Mammary epithelial cell (primary cell): ENCODE measurements at regions of chr1 and their contacts with region 1.

Region 1: DNA sequence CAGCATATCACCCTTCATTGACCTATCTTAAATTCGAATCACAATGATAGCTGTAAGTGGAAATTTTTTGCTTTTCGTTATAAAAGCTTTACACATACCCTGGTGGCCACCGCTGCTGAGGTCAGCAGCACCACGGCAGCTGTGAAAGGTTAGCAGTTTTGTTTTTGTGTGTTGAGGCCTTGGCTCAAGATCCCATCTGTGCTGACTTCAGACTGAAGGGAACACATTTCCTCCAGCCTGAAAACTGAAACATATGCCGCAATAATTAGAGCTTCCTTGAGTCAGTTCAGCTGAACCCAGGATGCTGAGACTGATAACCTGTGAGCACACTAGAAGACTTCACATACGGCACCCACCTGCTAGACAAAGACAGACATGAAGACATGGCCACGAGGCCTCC is 103.0 kb downstream of the SMYD3 start:
- DNase-seq: no peak
- H3K4me3 ChIP-seq: no peak overlapping the region
- H3K27ac ChIP-seq: no peak overlapping the region
- H3K4me1 ChIP-seq: no peaks in the 10 kb centered on the region
- H3K27me3 ChIP-seq: no peaks in the 10 kb centered on the region
- CTCF ChIP-seq: no peak

Region 2: GRCh38 chr1:246355411-246356230 is 48.5 kb before region 1 on chr1:
- CTCF ChIA-PET with region 1: no interaction called
- dilution Hi-C with region 1: no loop called
- in situ Hi-C with region 1: no loop called
- intact Hi-C with region 1: no loop called
- DNase-seq: no peak
- H3K4me3 ChIP-seq: no peak overlapping the region
- H3K27ac ChIP-seq: no peak overlapping the region
- H3K4me1 ChIP-seq: no peaks in the 10 kb centered on the region
- H3K27me3 ChIP-seq: no peaks in the 10 kb centered on the region
- CTCF ChIP-seq: no peak

Region 3: DNA sequence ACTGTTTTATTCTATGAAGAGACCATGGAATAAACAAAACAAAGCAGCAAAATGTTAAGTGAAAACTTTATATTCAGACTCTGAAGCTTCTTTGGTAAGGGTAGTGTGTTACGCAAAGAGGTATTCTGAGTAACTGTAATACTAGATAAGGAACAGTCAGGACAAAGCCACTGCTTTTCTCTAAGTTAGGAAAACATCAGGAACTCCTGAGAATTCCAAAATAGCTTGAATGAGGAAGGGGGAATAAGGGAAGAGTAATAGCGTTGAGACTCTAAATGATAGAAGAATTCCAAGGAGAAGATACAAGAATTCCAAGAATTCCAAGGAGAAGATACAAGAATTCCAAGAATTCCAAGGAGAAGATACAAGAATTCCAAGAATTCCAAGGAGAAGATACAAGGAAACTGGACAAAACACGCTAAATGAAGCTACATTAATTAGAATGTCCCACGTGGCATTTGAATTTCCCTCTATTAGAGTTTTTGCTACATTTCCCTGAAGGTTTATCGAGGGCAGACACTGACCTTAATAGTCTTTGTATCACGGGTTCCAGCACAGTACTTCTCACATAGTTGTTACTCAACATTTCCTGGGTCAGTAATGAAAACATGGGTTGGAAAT is 31.5 kb after region 1 on chr1:
- CTCF ChIA-PET with region 1: no interaction called
- dilution Hi-C with region 1: loop called (anchors 5 kb)
- in situ Hi-C with region 1: no loop called
- intact Hi-C with region 1: no loop called
- DNase-seq: no peak
- H3K4me3 ChIP-seq: no peak overlapping the region
- H3K27ac ChIP-seq: no peak overlapping the region
- H3K4me1 ChIP-seq: no peaks in the 10 kb centered on the region
- H3K27me3 ChIP-seq: no peaks in the 10 kb centered on the region
- CTCF ChIP-seq: no peak